ENCODE measurements at regions of chr18 and their contacts with region 1.

Region 1: GRCh38 chr18:69590150-69590549 is 189.5 kb downstream of the DOK6 start:
- DNase-seq: no peak
- ATAC-seq: no peak
- H3K4me3 Mint-ChIP-seq: no peak overlapping the region
- H3K27ac Mint-ChIP-seq: no peak overlapping the region
- H3K4me1 Mint-ChIP-seq: no peaks in the 10 kb centered on the region
- H3K27me3 Mint-ChIP-seq: no peaks in the 10 kb centered on the region
- CTCF ChIP-seq: no peak

Region 2: GRCh38 chr18:69651243-69651642 is 61.1 kb after region 1 on chr18:
- CTCF ChIA-PET with region 1: no interaction called
- POLR2A ChIA-PET with region 1: no interaction called
- intact Hi-C with region 1: loop called (anchors 2 kb)
- DNase-seq: no peak
- ATAC-seq: no peak
- H3K4me3 Mint-ChIP-seq: no peak overlapping the region
- H3K27ac Mint-ChIP-seq: no peak overlapping the region
- H3K4me1 Mint-ChIP-seq: no peaks in the 10 kb centered on the region
- H3K27me3 Mint-ChIP-seq: no peaks in the 10 kb centered on the region
- CTCF ChIP-seq: no peak

Region 3: DNA sequence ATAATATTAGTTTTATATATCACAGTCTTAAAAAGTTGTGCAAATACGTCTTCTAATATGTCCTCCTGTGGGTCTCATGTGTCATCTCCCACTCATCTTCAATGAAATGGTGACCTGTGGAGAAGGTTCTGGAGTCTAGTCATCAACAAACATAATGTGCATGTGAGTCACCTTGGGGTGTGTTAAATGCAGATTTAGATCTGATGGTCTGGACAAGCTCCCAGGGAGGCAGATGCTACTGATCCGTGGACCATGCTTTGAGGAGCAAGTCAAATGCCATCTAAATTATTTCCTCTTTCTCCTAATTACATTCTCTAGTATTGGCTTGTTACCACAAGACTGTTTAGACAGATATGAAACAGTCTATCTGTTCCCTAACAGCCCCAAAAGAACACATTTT is 146.6 kb after region 1 on chr18:
- CTCF ChIA-PET with region 1: no interaction called
- POLR2A ChIA-PET with region 1: no interaction called
- intact Hi-C with region 1: no loop called
- DNase-seq: no peak
- ATAC-seq: no peak
- H3K4me3 Mint-ChIP-seq: no peak overlapping the region
- H3K27ac Mint-ChIP-seq: no peak overlapping the region
- H3K4me1 Mint-ChIP-seq: no peaks in the 10 kb centered on the region
- H3K27me3 Mint-ChIP-seq: no peaks in the 10 kb centered on the region
- CTCF ChIP-seq: no peak